ENCODE measurements at regions of chr9 and their contacts with region 1.

Region 1: GRCh38 chr9:36748322-36748899 is 175.7 kb downstream of the MELK start:
- DNase-seq: peak; percentile 38
- H3K4me3 ChIP-seq: no peak overlapping the region
- H3K27ac ChIP-seq: no peak overlapping the region
- H3K4me1 ChIP-seq: no peaks in the 10 kb centered on the region
- H3K27me3 ChIP-seq: peaks cover 3% of the 10 kb centered on the region
- CTCF ChIP-seq: no peak

Region 2: GRCh38 chr9:36457836-36458429 is 290.5 kb before region 1 on chr9:
- CTCF ChIA-PET with region 1: no interaction called
- dilution Hi-C with region 1: no loop called
- in situ Hi-C with region 1: no loop called
- intact Hi-C with region 1: no loop called
- DNase-seq: no peak
- H3K4me3 ChIP-seq: no peak overlapping the region
- H3K27ac ChIP-seq: no peak overlapping the region
- H3K4me1 ChIP-seq: peaks cover 8% of the 10 kb centered on the region
- H3K27me3 ChIP-seq: no peaks in the 10 kb centered on the region
- CTCF ChIP-seq: no peak

Region 3: GRCh38 chr9:36517131-36517530 is 231.3 kb before region 1 on chr9:
- CTCF ChIA-PET with region 1: no interaction called
- dilution Hi-C with region 1: no loop called
- in situ Hi-C with region 1: no loop called
- intact Hi-C with region 1: no loop called
- DNase-seq: no peak
- H3K4me3 ChIP-seq: no peak overlapping the region
- H3K27ac ChIP-seq: no peak overlapping the region
- H3K4me1 ChIP-seq: no peaks in the 10 kb centered on the region
- H3K27me3 ChIP-seq: no peaks in the 10 kb centered on the region
- CTCF ChIP-seq: no peak

Region 4: GRCh38 chr9:36676778-36677485 is 71.5 kb before region 1 on chr9:
- CTCF ChIA-PET with region 1: no interaction called
- dilution Hi-C with region 1: no loop called
- in situ Hi-C with region 1: loop called in 1 of 2 experiments (anchors 10 kb)
- intact Hi-C with region 1: no loop called
- DNase-seq: no peak
- H3K4me3 ChIP-seq: no peak overlapping the region
- H3K27ac ChIP-seq: no peak overlapping the region
- H3K4me1 ChIP-seq: no peaks in the 10 kb centered on the region
- H3K27me3 ChIP-seq: no peaks in the 10 kb centered on the region
- CTCF ChIP-seq: no peak

Region 5: DNA sequence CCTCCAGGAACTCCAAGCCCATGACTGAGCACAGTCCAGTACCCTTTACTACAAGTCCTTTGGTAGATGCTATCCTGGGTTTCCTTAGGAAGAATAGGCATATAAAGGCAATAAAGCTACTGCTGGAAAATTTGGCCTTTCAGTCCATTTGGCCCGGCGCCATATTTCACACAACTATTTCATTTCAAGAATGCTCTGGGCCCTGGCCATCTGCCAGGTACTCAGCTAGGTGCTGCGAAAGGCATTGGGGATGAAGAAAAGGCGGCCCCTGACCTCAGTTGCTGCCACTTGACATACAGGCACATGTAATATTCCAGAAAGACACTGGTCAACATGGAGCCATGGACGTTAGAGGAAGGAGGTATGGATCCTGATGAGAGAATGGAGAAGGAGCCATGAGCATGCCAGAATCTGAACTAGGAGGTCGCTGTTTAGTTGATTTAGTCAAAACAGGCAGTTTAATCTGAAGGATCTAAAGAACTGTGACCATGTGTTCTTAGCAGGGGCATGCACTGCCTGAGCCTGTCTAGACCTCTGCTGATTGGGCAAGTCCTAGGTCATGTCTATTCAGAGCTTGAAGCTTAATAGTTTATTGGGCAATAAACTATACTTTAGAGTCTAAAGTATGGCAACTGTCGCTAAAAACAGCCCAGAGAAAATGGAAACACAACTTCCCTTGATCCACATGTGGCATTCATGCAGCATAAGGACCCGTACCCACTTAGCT is 26.4 kb before region 1 on chr9:
- CTCF ChIA-PET with region 1: no interaction called
- dilution Hi-C with region 1: loop called (anchors 5 kb)
- in situ Hi-C with region 1: no loop called
- intact Hi-C with region 1: no loop called
- DNase-seq: no peak
- H3K4me3 ChIP-seq: no peak overlapping the region
- H3K27ac ChIP-seq: no peak overlapping the region
- H3K4me1 ChIP-seq: no peaks in the 10 kb centered on the region
- H3K27me3 ChIP-seq: no peaks in the 10 kb centered on the region
- CTCF ChIP-seq: no peak

Region 6: GRCh38 chr9:36772450-36773403 is 24.3 kb after region 1 on chr9:
- CTCF ChIA-PET with region 1: no interaction called
- dilution Hi-C with region 1: no loop called
- in situ Hi-C with region 1: no loop called
- intact Hi-C with region 1: loop called (anchors 1 kb)
- DNase-seq: peak; percentile 40
- H3K4me3 ChIP-seq: no peak overlapping the region
- H3K27ac ChIP-seq: no peak overlapping the region
- H3K4me1 ChIP-seq: no peaks in the 10 kb centered on the region
- H3K27me3 ChIP-seq: peaks cover 4% of the 10 kb centered on the region
- CTCF ChIP-seq: no peak

Region 7: DNA sequence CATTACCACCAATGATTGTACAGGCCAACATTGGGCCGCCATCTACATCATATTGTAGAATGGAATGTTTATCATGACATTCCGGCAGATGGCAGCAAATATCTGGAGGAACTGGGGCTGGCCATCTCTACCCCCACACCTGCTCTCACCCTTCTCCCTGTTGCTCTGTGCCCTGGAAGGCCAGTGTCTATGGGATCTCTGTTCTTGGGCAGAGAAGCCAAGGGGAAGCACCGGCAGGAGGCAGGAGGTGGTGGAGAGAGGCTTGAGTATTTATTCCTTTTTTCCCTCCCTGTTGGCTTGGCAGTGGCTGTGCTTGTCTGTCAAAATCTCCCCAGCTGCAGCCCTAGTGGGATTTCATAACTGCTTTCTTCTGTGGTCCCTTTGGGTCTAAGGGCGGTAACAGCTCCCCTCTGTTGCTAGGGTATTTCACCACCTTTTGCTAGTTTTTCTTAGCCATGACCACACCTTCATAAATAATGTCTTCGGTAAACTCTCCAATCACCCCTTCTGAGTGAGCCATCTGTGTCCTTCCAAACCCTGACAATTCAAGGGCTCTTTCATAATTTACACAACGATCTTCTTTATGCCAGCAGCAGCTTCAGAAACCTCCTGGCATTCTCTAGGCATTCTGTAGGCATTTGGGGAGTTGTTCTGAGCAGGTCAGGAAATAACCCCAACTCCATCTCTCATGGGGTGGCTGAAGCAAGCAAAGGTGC is 50.1 kb after region 1 on chr9:
- CTCF ChIA-PET with region 1: no interaction called
- dilution Hi-C with region 1: no loop called
- in situ Hi-C with region 1: no loop called
- intact Hi-C with region 1: no loop called
- DNase-seq: no peak
- H3K4me3 ChIP-seq: no peak overlapping the region
- H3K27ac ChIP-seq: no peak overlapping the region
- H3K4me1 ChIP-seq: no peaks in the 10 kb centered on the region
- H3K27me3 ChIP-seq: peaks cover 4% of the 10 kb centered on the region
- CTCF ChIP-seq: peak; percentile 5 to 23

Measured in mammary epithelial cell (primary cell).